ENCODE measurements at regions of chr3 and their contacts with region 1.

Region 1: GRCh38 chr3:138915503-138916498 is 31.1 kb downstream of the FOXL2 start:
- DNase-seq: peak; percentile 83
- H3K4me3 ChIP-seq: peak overlapping the region; percentile 84
- H3K27ac ChIP-seq: peak overlapping the region; percentile 88
- H3K27me3 ChIP-seq: no peaks in the 10 kb centered on the region
- CTCF ChIP-seq: peak; percentile 77

Region 2: GRCh38 chr3:138686771-138687221 is 229.0 kb before region 1 on chr3:
- in situ Hi-C with region 1: loop called (anchors 25 kb)
- DNase-seq: peak; percentile 80
- H3K4me3 ChIP-seq: no peak overlapping the region
- H3K27ac ChIP-seq: peak overlapping the region; percentile 73
- H3K27me3 ChIP-seq: no peaks in the 10 kb centered on the region
- CTCF ChIP-seq: no peak